ENCODE measurements at regions of chr2 and their contacts with region 1.

Region 1: DNA sequence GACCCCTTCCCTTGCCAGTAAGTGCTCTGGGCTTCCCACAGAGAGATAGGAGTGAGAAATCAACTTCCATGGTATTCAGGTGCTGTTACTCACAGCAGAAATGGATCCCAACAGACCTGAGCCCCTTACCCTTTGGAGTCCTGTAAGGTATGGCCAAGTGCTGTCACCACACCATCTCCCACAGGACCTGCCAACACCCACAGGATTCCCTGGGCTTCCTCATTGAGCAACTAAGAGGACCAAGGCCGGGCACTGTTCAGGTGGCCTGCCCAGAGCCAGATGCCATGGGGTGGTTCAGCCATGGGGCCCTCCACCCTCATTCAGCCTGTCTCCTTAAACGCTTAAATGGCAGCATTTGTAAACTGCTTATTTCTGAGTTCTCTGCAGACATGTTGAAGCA is 166.2 kb downstream of the TRIM43 start:
- DNase-seq: no peak

Region 2: DNA sequence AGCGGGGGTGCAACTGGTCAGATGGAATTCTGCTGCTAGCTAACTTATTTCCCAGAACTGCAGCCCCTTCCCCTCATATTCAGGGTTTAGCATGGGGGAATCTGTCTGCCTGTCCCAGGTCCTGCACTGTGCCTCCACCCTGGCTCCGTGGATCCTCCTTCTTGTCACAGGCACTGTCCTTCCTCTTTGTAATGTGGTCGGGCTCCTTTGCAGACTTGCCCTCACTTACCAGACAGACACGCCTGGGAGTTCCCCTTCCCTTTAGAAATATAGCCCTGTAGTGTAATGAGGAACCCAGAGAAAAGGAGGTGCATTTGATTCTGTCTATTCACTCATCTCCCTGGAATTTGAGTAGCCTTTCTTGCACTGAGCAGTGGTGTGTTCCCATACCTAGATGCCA is 57.5 kb before region 1 on chr2:
- intact Hi-C with region 1: loop called in 1 of 2 experiments (anchors 2 kb)
- DNase-seq: no peak